ENCODE measurements at regions of chr7 and their contacts with region 1.

Region 1: DNA sequence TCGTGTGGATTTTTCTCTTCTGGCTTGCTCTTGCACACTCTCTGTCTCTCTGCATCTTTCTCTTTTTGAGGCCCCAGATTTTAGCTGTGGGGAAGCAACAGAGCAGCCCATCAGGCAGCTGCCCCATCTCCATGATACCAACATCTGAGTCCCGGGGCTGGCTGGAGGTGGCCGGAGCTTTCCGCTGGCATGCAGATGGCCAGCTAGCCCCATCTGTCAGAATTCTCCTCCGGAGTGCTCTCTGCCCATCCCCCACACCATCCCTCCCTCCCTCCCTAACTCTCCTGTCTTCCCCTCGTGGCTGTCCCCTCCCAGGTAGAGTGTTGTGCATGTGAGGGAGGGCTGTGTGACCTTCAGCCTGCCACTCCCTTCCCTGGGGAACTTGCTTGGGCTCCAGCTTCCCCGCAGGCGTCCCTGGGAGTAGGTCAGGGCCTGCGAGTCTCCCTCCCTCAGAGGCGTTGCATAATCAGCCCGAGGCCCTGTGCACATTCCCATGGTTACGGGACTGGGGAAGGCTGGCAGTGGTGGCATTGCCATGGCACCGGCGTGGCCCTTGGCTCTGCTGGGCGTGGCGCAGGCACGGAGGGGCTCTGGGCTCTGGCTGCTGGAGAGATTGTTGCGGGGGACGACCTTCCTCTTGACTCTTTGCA is 24.7 kb downstream of the GHRHR start:
- DNase-seq: peak in 1 of 2 donors; percentile 56
- ATAC-seq: peak in 7 of 8 donors; percentile 12 to 58 (median 45)
- H3K4me3 ChIP-seq: no peak overlapping the region
- H3K27ac ChIP-seq: peak overlapping the region in 3 of 10 donors; percentile 7 to 55 (median 52)
- H3K4me1 ChIP-seq: peaks cover 0 to 18% (median 10%) of the 10 kb centered on the region in 9 donors
- H3K27me3 ChIP-seq: peaks cover 0 to 18% (median 10%) of the 10 kb centered on the region in 7 donors
- CTCF ChIP-seq: no peak

Region 2: DNA sequence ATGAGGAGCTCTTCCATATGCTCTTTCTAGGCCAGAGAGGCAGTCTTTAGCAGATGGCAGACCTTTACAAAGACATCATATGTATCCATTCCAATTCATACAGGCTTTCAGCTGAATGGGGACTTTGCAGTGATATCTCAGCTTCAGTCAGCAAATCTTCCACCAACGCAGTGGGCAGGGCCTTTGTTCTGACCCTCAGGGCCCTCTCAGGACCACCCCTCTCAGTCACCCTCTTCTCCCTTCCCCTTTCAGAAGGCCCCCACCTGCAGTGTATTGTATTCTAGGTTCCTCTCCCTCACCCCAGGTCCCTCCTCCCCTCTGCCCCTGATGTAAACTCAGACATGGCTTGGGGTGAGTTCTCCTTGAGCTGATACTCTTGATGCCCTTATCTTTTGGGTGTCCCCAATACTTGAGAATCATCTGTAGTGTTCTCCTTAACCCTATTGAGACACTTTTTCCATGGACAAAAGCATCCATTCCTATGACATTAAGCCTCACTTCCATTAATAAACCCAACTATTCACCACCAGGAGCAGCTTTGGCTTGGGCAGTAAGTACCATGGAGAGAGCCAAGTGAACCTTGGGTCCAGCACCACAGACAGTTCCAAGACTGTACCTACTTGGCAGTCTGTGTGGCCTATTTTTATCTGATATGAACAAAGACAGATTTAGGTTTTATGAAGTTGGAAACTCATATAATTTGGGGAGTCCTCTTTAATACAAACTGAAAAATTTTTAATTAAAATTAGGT is 126.3 kb after region 1 on chr7:
- intact Hi-C with region 1: loop called in 1 of 10 experiments (anchors 2 kb)
- DNase-seq: no peak
- ATAC-seq: peak in 2 of 8 donors; percentile 55 to 58
- H3K4me3 ChIP-seq: no peak overlapping the region
- H3K27ac ChIP-seq: no peak overlapping the region
- H3K4me1 ChIP-seq: no peaks in the 10 kb centered on the region
- H3K27me3 ChIP-seq: no peaks in the 10 kb centered on the region
- CTCF ChIP-seq: no peak

Measured in heart right ventricle (tissue), 16 donors.